ENCODE measurements at regions of chr12 and their contacts with region 1.

Region 1: GRCh38 chr12:108950991-108951739 is 69.7 kb downstream of the SVOP start:
- DNase-seq: peak; percentile 76 to 96
- H3K4me3 ChIP-seq: no peak overlapping the region
- CTCF ChIP-seq: peak in 1 of 3 donors; percentile 51
- POLR2A ChIP-seq: no peak

Region 2: GRCh38 chr12:108570743-108571608 is 380.2 kb before region 1 on chr12:
- intact Hi-C with region 1: loop called (anchors 10 kb)
- DNase-seq: peak in 1 of 2 donors; percentile 70
- H3K4me3 ChIP-seq: no peak overlapping the region
- CTCF ChIP-seq: no peak
- POLR2A ChIP-seq: no peak

Region 3: DNA sequence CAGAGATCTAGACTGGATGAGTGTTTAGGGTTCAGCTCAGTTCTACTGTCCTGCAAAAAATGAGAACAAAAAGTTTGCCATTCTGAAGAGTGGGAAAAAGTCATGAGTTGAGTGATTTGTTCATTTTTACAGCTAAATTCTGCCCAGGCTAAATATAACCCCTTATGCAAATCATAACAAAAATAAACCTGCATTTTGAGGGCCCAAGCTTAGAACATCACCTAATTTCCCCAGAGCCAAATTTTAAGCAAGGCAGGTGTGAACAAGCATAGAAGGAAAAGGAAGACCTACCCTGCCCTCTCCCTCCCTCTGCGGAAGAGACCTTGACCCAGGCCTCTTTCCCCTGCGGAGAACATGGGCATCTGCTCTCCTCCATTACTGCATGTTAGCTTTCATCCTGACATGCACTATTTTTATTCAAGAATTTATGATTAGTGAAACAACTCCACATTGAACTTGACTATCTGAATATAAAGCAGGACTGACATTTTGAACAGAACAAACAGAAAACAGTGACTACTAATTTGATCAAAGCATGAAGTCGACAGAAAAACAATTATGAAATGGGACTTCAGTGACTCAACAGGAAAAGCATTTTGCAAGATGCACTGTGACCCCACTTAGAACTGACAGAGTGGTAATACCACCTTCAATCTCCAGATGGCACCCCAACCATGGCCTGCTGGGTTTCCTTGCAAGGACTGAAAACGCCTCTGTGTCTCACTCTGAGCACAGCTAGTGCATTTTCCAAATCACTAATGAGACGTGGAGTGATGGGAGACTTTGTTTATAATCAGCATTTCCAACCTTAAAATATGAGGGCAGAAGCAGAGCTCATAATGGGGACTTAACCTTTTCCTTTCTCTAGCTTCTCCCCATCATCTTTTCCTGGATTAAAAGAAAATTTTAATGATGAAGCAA is 286.6 kb before region 1 on chr12:
- intact Hi-C with region 1: loop called (anchors 10 kb)
- DNase-seq: peak; percentile 94 to 95
- H3K4me3 ChIP-seq: no peak overlapping the region
- CTCF ChIP-seq: peak in 1 of 3 donors; percentile 94
- POLR2A ChIP-seq: no peak

Region 4: DNA sequence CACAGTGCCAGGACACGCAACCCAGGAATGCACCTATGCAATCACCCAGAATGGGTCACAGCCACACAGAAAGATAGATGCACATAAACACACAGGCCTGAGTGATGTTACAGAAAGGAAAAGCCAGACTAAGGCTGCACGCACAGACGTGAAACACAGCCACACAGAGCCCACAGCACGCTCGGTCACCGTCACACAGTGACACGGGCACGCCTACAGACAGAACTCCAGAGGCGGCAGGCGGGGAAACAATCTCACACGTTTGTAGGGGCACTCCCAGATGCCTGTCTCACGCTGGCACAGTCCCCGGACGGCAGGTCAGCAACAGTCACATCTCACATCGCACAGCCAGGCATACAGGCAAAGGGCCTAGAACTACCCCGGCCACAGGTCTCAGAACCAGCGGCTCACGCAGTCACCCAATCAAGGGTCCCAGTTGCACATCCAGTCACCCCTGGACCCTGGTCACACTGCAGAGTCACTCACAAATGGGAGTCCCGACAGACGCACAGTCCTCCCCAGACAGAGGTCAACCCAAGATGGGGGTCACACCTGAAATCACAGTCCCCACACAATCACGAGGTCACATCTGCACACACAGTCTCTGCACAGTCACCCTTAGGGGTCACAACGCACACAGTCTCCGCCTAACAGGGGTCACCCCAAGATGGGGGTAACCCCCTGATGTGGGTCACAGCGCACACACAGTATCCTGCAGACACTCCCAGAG is 94.6 kb before region 1 on chr12:
- intact Hi-C with region 1: no loop called
- DNase-seq: peak in 1 of 2 donors; percentile 95
- H3K4me3 ChIP-seq: peak overlapping the region; percentile 47
- CTCF ChIP-seq: no peak
- POLR2A ChIP-seq: no peak

Region 5: DNA sequence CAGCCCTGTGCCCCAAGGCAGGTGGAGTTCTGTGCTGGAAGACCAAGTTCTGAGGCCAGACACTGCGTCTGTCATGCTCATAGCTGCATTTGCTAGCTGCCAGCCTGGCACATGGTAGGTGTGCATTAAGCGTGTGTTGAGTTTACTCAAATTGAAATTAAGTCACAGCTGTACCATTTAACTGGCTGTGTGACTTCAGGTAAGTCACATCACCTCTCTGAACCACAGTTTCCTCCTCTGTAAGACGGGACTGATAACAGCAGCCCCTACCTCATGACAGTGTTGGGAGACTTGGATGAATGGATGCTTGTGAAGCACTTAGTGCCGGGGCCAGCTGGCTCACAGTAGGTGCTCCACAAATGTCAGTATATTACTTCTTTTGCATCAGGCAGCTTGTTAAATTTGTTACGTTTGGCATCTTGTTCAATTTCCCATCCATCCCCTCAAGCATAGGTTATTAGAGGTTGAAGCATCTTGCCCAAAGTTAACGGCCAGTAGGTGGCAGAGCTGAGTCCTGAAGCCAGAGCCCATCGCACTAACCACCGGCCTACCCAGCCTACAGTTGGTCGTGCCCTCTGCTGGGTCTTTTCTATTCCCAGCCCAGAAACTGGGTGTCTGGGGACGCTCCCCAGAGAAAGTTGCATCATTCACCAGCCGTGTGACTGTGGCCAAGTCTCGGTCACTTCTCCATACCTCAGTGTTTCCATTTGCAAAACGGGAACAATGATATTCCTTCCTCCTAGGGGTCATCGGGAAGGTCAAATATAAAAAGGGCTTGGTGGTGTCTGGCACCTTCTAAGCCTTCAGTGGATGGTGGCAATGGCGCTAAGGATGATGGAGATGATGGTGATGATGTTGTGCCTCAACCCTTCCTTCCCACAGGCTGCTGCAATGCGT is 66.8 kb before region 1 on chr12:
- intact Hi-C with region 1: loop called (anchors 10 kb)
- DNase-seq: peak in 1 of 2 donors; percentile 30
- H3K4me3 ChIP-seq: no peak overlapping the region
- CTCF ChIP-seq: no peak
- POLR2A ChIP-seq: no peak

Region 6: DNA sequence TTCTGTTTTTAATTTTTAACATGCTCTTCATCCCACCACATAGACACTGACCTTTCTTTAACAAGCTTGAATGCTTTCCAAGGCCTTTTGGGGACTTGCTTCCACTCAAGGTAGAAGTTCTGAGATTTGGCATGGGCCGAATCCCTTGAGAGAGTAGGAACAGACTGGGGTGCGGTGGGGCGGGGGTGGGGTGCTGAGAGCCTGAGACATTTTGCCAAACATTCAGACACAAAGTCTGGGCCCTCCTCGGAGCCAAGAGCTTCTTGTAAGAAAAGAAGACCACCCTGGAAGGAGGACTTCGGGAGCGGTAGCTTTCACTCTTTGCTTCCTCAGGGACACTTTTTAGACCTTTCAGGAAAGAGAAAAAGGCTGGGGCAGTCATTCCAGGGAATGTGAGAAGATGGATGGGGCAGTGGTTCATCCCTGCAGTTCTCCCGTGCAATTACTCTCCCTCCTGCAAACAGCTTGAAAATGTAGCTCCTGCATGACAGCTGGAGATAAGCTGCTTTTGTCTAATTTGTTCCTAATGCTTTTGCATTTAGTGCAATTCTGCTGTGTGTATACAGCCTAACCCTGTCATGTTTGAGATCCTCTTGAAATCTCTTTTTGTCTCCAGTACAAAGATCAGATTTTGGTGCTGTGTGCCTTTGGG is 380.3 kb after region 1 on chr12:
- intact Hi-C with region 1: no loop called
- DNase-seq: no peak
- H3K4me3 ChIP-seq: no peak overlapping the region
- CTCF ChIP-seq: no peak
- POLR2A ChIP-seq: no peak

Region 7: DNA sequence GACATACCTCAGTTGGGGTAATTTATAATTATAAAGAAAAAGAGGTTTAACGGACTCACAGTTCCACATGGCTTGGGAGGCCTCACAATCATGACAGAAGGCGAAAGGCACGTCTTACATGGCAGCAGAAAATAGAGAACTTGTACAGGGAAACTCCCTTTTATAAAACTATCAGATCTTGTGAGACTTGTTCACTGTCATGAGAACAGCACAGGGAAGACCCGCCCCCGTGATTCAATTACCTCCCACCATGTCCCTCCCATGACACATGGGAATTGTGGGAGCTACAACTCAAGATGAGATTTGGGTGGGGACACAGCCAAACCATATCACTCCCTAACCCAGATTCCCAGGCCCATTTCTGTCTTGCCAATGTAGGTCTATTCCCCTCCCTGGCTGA is 418.7 kb after region 1 on chr12:
- intact Hi-C with region 1: no loop called
- DNase-seq: no peak
- H3K4me3 ChIP-seq: no peak overlapping the region
- CTCF ChIP-seq: no peak
- POLR2A ChIP-seq: no peak

Measured in lower leg skin (tissue), 4 donors.